ENCODE measurements at regions of chr1 and their contacts with region 1.

Region 1: DNA sequence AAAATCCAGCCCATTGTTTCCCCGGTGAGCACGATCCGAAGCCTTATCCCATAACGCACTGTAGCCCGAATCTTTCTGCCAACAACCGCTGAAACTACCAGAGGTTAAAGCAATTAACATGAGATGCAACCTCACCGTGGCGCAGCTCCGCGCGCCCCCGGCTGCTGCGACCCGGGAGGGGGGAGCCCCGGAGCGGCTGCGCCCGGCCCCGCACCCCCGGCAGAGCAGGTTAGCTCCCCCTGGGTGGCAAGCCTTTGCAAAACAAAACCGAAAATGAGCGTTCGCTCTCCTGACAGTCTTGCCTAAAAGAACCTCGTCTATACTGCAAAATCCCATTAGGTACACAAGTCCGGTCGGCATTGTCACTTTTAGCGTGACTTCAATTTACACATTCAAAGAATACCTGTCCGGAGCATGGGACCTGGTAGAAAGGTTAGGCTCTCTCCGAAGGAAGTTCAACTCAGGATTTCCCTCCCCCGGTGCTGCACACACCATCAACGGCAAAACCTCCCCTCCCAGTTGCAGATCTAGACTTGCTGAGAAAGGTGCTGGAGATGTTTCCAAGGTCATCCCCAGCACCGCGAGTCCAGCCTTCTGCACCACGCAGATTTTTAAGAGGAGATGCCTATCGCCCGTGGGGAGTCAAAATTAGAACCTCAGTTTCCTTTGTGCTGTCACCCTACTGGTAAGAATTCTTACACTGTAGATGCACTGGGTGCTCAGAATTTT is 107.5 kb downstream of the ZNF281 start:
- DNase-seq: peak; percentile 62 to 75 (median 71)
- H3K4me3 ChIP-seq: peak overlapping the region; percentile 71 to 89
- H3K4me3 Mint-ChIP-seq: peak overlapping the region; percentile 90 to 96 (median 93)
- H3K27ac ChIP-seq: peak overlapping the region; percentile 35
- H3K27ac Mint-ChIP-seq: peak overlapping the region; percentile 76 to 94 (median 87)
- H3K4me1 ChIP-seq: peaks cover 19% of the 10 kb centered on the region
- H3K4me1 Mint-ChIP-seq: peaks cover 12 to 25% (median 16%) of the 10 kb centered on the region in 4 donors
- H3K27me3 ChIP-seq: no peaks in the 10 kb centered on the region
- H3K27me3 Mint-ChIP-seq: peaks cover 0 to 1% of the 10 kb centered on the region in 2 donors

Region 2: DNA sequence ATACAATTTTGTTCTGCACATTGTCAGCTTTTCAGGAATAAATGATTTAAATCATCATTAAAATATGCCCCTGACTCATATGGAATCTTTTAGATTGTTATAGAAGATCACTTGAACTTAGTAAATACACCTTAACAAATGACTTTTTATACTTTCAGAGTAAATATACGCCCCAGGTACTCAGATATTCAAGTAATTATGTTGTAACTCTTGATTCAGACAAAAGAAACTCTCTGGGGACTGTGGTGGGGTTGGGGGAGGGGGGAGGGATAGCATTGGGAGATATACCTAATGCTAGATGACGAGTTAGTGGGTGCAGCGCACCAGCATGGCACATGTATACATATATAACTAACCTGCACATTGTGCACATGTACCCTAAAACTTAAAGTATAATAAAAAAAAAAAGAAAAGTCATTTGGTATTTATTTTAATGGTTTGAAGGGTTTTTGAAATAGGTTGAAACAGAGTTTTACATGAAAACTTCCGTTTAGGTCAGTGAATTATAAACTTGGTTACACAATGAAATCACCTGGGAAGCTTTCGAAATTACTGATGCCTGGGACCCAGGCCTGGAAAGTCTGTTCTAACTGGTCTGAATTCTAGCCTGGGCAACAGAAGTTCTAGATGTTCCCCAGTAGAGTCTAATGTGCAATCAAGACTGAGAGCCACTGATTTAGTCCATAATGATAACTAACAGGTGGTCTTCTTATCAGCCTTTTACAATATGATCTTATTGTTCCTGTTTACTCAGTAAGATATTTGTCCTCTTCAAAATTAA is 595.3 kb before region 1 on chr1:
- CTCF ChIA-PET with region 1: no interaction called
- POLR2A ChIA-PET with region 1: no interaction called
- intact Hi-C with region 1: no loop called
- DNase-seq: no peak
- H3K4me3 ChIP-seq: no peak overlapping the region
- H3K4me3 Mint-ChIP-seq: no peak overlapping the region
- H3K27ac ChIP-seq: no peak overlapping the region
- H3K27ac Mint-ChIP-seq: no peak overlapping the region
- H3K4me1 ChIP-seq: no peaks in the 10 kb centered on the region
- H3K4me1 Mint-ChIP-seq: no peaks in the 10 kb centered on the region
- H3K27me3 ChIP-seq: no peaks in the 10 kb centered on the region
- H3K27me3 Mint-ChIP-seq: peaks cover 6 to 11% of the 10 kb centered on the region in 2 donors

Region 3: DNA sequence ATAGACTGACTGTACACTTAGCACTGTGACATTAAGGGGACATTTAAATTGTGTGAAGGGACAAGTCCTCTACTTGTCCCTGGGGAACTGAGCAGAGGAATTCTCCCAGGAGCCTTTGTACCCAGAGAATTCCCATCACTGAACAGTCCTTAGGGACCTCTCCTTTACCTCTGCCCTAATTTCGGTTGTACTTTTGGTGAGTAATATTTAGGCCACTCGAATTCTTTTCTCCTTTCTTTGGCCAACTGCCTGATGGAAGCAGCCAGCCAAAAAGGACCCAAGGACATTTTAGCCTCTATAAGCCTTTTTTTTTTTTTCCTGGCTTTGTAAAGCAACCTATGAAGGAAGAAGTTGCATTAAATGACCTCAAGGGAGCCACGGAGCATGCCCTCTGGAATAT is 203.3 kb before region 1 on chr1:
- CTCF ChIA-PET with region 1: no interaction called
- POLR2A ChIA-PET with region 1: no interaction called
- intact Hi-C with region 1: loop called (anchors 2 kb)
- DNase-seq: no peak
- H3K4me3 ChIP-seq: no peak overlapping the region
- H3K4me3 Mint-ChIP-seq: no peak overlapping the region
- H3K27ac ChIP-seq: no peak overlapping the region
- H3K27ac Mint-ChIP-seq: no peak overlapping the region
- H3K4me1 ChIP-seq: no peaks in the 10 kb centered on the region
- H3K4me1 Mint-ChIP-seq: no peaks in the 10 kb centered on the region
- H3K27me3 ChIP-seq: no peaks in the 10 kb centered on the region
- H3K27me3 Mint-ChIP-seq: peaks cover 1% of the 10 kb centered on the region in 2 donors

Region 4: DNA sequence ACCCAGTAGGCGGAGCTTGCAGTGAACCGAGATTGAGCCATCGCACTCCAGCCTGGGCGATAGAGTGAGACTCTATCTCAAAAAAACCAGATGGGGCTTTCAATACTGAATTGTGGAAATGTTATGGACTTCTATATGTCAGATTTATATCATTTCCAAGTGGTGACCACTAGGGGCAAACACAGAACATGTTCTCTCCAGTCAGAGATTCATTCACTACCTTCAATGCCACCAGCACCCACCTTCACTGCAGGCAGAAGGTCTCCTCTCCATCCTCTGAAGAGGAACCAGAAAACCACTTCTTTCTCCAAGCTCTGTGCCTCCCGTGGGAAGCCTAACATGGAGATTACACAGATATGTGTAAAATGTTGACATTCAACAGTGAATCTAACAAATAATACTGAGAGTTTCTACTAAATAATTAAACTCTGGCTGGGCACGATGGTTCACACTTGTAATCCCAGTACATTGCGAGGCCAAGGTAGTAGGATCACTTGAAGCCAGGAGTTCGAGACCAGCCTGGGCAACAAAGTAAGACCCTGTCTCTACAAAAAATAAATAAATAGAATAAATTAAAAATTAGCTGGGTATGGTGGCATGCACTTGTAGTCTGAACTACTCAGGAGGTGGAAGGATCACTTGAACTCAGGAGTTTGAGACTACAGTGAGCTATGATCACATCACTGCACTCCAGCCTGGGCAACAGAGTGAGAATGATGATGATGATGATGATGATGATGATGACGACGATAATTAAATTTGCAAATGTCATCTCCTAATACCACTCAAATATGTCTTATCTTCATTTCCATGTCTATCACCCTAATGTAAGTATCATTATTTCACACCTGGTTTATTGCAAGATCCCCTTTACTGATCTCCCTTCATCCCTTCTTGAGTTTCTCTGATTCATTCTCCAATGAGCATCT is 43.6 kb before region 1 on chr1:
- CTCF ChIA-PET with region 1: interaction called, 3 read pairs
- POLR2A ChIA-PET with region 1: no interaction called
- intact Hi-C with region 1: loop called (anchors 1 kb)
- DNase-seq: peak in 2 of 5 donors; percentile 4 to 12
- H3K4me3 ChIP-seq: no peak overlapping the region
- H3K4me3 Mint-ChIP-seq: no peak overlapping the region
- H3K27ac ChIP-seq: no peak overlapping the region
- H3K27ac Mint-ChIP-seq: no peak overlapping the region
- H3K4me1 ChIP-seq: no peaks in the 10 kb centered on the region
- H3K4me1 Mint-ChIP-seq: peaks cover 0 to 4% (median 0%) of the 10 kb centered on the region in 4 donors
- H3K27me3 ChIP-seq: no peaks in the 10 kb centered on the region
- H3K27me3 Mint-ChIP-seq: peaks cover 0 to 12% of the 10 kb centered on the region in 2 donors

Region 5: GRCh38 chr1:200409761-200410565 is 107.6 kb after region 1 on chr1 and contains the start of gene ZNF281:
- CTCF ChIA-PET with region 1: no interaction called
- POLR2A ChIA-PET with region 1: interaction called, 3 read pairs
- intact Hi-C with region 1: loop called (anchors 2 kb)
- DNase-seq: peak; percentile 92 to 95 (median 94)
- H3K4me3 ChIP-seq: peak within 1 kb of the TSS; percentile 70 to 87
- H3K4me3 Mint-ChIP-seq: peak within 1 kb of the TSS; percentile 98 to 99 (median 99)
- H3K27ac ChIP-seq: peak within 1 kb of the TSS; percentile 88
- H3K27ac Mint-ChIP-seq: peak within 1 kb of the TSS; percentile 93 to 98 (median 96)
- H3K4me1 ChIP-seq: peaks cover 41% of the 10 kb centered on the region
- H3K4me1 Mint-ChIP-seq: peaks cover 39 to 57% (median 49%) of the 10 kb centered on the region in 4 donors
- H3K27me3 ChIP-seq: no peaks in the 10 kb centered on the region
- H3K27me3 Mint-ChIP-seq: no peaks in the 10 kb centered on the region
- total RNA-seq, gene ZNF281: 23.1 to 24.1 TPM

Region 6: DNA sequence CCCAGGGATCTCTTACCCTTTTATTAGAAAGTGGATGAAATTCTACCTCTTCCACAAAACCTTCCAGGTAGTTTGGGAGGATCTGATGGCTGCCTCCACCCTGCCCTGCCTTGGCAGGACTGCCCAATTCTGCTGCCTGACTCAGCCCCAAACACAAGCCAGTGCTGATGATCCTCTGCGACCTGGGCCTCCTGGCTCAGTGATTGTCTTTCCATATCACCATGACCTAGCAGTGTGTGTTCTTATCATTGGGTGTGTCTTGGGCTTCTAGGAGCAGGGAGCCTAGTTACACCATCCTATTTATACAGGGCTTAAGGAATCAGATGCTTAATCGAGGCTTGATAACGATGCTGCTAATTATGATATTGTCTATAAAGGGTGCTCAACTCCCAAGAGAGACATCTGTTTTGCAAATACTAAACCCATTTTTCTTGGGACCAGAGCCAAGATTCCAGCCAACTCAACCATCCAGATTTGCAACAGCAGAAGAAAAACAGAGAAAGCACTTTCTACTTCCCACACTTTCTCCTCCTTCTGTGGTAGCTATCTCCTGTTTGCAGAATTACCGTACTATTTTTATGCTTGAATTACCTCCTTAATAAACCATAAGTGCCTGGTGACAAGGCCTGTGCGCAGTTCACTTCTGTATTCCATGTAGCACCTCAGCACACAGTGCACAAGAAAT is 757.7 kb after region 1 on chr1:
- CTCF ChIA-PET with region 1: no interaction called
- POLR2A ChIA-PET with region 1: no interaction called
- intact Hi-C with region 1: no loop called
- DNase-seq: no peak
- H3K4me3 ChIP-seq: no peak overlapping the region
- H3K4me3 Mint-ChIP-seq: no peak overlapping the region
- H3K27ac ChIP-seq: no peak overlapping the region
- H3K27ac Mint-ChIP-seq: no peak overlapping the region
- H3K4me1 ChIP-seq: peaks cover 4% of the 10 kb centered on the region
- H3K4me1 Mint-ChIP-seq: peaks cover 0 to 10% (median 7%) of the 10 kb centered on the region in 4 donors
- H3K27me3 ChIP-seq: no peaks in the 10 kb centered on the region
- H3K27me3 Mint-ChIP-seq: no peaks in the 10 kb centered on the region